ENCODE measurements at regions of chr7 and their contacts with region 1.

Region 1: DNA sequence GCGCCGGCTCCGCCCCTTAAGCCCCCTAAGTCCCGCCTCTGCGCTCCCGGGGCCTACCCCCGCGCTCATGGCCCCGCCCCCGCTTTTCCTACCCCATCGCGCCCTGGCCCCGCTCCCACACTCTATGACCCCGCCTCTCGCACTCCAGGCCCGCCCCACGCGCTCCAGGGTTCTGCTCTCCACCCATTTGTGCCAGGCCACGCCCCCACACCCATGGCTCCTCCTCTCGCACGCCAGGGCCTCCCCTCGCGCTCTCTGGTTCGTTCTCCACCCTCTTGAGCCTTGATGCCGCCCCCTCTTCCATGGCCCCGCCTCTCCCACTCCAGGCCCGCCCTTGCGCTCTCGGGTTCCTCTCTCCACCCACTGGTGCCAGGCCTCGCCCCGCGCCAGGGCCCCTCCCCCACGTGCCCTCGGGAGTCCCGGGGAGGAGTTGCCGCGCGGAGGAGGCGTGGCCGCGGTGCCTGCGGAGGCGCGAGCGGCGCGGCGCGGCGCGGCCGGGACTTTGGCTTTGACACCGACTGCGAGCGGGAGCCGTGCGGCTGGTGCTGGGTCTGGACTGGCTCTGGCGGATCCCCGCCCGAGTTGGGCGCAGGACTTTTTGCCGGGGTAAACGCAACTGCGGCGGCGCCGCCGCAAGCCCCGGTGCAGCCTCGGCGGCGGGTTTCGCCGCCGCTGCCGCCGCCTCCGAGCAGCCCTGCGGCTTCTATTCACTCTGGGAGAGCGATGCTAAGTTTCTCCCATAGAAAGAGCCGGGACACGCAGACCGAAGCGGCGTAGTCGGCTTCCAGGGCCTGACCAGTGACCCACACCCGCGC is at the start of gene EEPD1:
- DNase-seq: peak; percentile 99 to 100 (median 100)
- H3K4me3 ChIP-seq: peak within 1 kb of the TSS; percentile 52 to 98 (median 87)
- H3K27ac ChIP-seq: peak within 1 kb of the TSS; percentile 44 to 97 (median 91)
- H3K27me3 ChIP-seq: no peaks in the 10 kb centered on the region
- CTCF ChIP-seq: peak in 18 of 56 donors; percentile 6 to 26 (median 12)
- total RNA-seq, gene EEPD1: 9.9 to 35.5 (median 17.5) TPM

Region 2: DNA sequence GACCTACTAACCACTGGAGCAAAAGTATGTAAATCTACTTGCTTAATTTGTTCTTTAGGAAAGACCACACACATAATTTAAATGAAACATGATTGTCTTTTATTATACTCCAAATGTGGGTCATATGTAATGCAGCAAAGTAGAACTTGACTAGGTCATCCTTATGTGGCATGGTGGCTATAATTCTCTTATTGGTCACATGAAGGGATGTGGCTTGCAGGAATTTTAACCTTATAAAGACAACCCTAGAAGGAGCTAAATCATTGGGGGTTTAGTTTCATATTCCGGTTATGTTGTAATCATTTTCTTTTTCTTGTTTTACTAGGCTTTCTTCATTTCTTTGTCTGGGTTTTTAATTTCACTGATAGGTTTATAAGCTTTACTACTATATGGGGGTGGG is 258.2 kb before region 1 on chr7:
- intact Hi-C with region 1: no loop called
- DNase-seq: no peak
- H3K4me3 ChIP-seq: no peak overlapping the region
- H3K27ac ChIP-seq: peak overlapping the region in 4 of 59 donors; percentile 10 to 21 (median 17)
- H3K27me3 ChIP-seq: no peaks in the 10 kb centered on the region
- CTCF ChIP-seq: no peak

Region 3: DNA sequence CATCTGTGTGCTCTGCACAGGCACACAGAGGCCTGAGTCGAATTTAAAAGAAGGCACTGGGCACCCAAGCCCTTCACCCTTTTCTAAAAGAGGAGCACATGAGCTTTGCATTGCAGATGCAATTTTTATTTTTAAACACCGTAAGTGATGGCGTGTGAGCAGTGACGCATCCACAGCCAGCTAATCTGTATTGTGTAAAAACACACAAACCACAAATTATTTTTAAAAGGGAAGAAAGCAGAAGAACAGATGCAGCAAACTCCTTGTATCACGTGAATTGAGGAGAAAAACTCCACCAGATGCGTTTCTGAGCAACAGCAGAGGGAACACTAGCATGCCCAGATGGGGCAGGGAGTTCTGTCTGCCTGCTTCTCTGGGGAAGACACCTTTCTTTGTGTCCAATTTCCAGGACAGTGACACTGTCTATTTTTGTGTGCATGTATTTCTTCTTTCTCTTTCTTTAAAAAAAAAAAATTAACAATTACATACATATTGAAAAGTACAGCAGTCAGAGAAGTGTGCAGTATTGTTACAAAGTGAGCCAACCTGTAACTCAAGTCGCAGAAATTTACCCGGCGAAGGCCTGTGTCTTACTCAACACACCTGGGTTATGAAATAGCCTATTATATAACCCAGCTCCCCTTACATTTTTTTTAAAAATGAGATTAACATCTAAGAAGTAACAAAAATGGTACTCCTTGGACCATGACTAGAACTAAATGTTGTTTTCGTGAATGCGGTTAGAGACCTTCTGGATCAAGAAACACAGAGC is 39.3 kb after region 1 on chr7:
- intact Hi-C with region 1: loop called in 1 of 2 experiments (anchors 5 kb)
- DNase-seq: peak in 1 of 10 donors; percentile 53
- H3K4me3 ChIP-seq: peak overlapping the region in 6 of 59 donors; percentile 0 to 28 (median 8)
- H3K27ac ChIP-seq: peak overlapping the region in 51 of 59 donors; percentile 6 to 81 (median 57)
- H3K27me3 ChIP-seq: no peaks in the 10 kb centered on the region
- CTCF ChIP-seq: peak in 3 of 56 donors; percentile 8 to 31 (median 20)

Region 4: DNA sequence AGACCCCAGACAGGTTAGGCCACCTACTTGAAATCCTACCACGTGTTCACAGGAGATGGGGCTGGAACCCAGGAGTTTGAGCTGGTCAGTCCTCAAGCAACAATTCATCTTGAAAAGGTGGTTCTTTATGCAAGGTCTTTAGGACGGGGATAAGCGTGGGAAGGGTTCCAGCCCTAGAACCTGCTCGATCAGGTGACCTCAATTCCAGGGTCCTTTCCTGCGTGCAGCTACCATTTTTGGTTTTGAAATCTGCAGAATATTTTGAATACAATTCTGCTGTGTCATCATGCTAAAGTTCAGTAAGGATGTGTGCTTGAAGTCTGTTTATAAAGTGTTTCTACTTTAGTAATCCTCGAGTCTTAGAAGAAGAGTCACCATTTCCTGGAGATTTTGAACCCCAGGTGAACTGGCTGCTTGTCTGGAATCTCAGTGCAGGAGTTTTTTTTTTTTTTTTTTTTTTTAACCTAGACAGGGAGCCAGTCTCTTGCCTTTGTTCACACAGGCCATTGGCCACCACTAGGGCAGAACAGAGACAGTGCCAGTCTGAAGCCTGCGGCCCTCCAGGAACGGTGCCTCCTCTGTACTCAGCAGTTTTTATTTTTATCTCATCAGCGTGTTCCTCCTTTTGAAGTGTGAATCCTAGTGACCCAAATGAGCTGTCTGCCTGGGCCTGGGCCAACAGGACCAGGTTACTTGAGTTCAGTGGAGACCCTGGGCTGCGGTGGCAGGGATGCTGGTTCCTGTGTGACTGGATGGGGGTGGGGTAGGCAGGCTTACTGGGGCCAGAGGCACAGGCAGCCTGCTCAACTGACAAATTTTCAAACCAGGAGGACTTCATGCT is 54.7 kb after region 1 on chr7:
- intact Hi-C with region 1: loop called in 1 of 2 experiments (anchors 5 kb)
- DNase-seq: peak in 9 of 10 donors; percentile 13 to 71 (median 54)
- H3K4me3 ChIP-seq: no peak overlapping the region
- H3K27ac ChIP-seq: peak overlapping the region in 42 of 59 donors; percentile 4 to 80 (median 42)
- H3K27me3 ChIP-seq: no peaks in the 10 kb centered on the region
- CTCF ChIP-seq: peak in 31 of 56 donors; percentile 11 to 40 (median 27)

Region 5: GRCh38 chr7:36280840-36281812 is 128.2 kb after region 1 on chr7:
- intact Hi-C with region 1: loop called (anchors 2 kb)
- DNase-seq: peak; percentile 61 to 93 (median 85)
- H3K4me3 ChIP-seq: peak overlapping the region in 56 of 59 donors; percentile 1 to 64 (median 40)
- H3K27ac ChIP-seq: peak overlapping the region; percentile 80 to 99 (median 95)
- H3K27me3 ChIP-seq: no peaks in the 10 kb centered on the region
- CTCF ChIP-seq: peak in 14 of 56 donors; percentile 7 to 27 (median 14)

Measured in dorsolateral prefrontal cortex (tissue), 120 donors.